MCF 10A (cell line): ENCODE measurements at regions of chr1 and their contacts with region 1.

Region 1: DNA sequence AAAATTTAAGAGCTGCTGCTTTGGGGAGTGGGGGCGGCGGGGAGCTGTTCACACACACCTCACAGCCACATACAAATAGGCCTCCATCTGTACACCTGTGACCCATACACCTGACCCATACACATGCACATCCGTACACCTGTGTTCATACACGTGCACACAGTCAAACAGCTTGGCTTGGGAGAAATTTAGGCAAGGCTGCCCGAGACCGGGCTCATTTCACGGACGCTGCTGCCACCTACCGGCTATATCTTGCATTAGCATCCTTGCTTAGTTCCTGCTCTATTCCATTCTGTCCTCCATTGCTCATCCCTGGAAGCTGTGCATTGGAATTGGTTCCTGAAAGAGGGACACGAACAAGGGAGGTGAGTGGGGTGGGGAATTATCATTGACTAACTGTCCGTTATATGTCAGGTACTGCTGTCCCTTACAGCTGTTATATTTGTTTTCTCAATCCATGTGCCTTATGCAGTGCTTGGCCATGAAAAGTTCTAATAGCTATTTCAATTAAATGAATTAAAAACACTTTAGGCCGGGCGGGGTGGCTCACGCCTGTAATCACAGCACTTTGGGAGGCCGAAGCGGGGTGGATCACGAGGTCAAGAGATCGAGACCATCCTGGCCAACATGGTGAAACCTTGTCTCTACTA is 37.1 kb upstream of the EPB41 start:
- DNase-seq: peak; percentile 85
- H3K4me3 Mint-ChIP-seq: no peak overlapping the region
- H3K27ac Mint-ChIP-seq: no peak overlapping the region
- H3K4me1 Mint-ChIP-seq: peaks cover 4% of the 10 kb centered on the region
- H3K27me3 Mint-ChIP-seq: no peaks in the 10 kb centered on the region
- CTCF ChIP-seq: peak; percentile 91

Region 2: DNA sequence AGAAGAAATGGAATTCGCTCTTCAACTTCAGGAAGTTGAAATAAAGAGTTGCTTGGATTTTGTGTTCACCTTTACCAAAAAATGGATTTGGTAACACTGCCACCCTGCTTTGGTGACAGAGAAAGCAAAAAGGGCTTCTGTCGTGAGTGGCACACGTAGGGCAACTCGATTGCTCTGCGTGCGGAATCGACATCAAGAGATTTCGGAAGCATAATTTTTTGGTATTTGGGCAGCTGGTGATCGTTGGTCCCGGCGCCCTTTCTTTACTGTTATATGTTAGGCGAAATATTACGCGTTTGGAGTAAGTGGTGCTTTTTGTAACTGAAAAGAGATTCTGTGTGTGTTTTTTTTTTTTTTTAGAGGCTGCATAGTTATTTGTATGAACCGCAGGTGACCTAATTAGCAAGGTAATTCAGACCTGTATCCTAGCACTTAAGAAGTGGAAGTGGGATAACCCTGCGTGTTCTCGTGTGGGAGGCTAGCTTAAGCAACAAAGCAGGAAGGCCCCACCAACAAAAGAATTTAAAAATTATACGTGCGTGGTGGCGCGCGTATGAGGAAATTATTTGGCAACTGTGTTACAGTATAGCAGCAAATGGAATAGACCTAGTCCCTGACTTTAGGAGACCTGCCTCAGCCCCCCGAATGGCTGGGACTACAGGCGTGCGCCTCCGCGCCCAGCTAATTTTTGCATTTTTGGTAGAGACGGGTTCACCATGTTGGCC is 228.6 kb before region 1 on chr1 and contains the start of gene RNU11:
- CTCF ChIA-PET with region 1: interaction called, 7 read pairs
- POLR2A ChIA-PET with region 1: interaction called, 9 read pairs
- intact Hi-C with region 1: loop called (anchors 2 kb)
- DNase-seq: peak; percentile 97
- H3K4me3 Mint-ChIP-seq: peak within 1 kb of the TSS; percentile 77
- H3K27ac Mint-ChIP-seq: peak within 1 kb of the TSS; percentile 100
- H3K4me1 Mint-ChIP-seq: peaks cover 25% of the 10 kb centered on the region
- H3K27me3 Mint-ChIP-seq: no peaks in the 10 kb centered on the region
- CTCF ChIP-seq: no peak
- total RNA-seq, gene RNU11: not detected in 2 replicates

Region 3: DNA sequence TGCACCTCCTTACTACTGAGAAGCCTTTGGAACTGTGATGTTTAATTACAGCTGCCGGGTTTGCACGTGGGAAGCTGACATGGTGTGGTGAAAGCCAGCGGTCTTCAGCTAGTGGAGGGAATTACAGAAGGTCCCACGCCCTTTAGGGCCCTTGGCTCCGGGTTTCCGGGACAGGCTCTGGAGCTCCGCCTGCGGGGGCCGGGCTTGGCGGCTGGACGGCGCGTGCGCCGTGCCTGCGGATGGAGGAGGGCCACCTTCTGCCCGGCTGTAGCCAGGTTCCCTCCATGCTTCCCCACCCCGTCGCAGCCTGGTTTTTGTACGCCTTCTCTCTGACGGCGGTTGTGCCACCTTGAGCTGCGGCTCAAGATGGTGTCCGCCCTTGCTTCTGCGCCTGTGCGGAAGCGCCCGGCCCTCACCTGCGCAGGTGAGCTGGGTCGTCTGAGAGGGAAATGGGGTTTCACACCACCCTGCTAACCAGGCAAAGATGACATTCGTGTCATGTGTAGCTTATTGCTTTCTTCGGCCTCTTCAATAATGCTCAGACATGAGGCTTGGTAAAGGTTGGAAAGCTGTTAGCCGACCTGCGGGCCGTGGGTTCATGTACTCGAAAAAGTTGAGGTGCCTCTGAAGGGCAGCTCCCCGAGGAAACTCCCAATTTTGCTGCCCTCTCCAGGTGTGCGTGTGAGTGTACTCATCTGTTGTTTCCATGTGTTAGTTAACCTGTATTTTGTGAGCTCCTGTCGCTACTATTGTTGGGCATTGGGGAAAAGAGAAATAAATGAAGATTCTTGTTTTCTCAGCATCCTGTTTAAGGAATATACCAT is 101.9 kb before region 1 on chr1:
- CTCF ChIA-PET with region 1: interaction called, 24 read pairs
- POLR2A ChIA-PET with region 1: interaction called, 11 read pairs
- intact Hi-C with region 1: no loop called
- DNase-seq: peak; percentile 45
- H3K4me3 Mint-ChIP-seq: peak overlapping the region; percentile 64
- H3K27ac Mint-ChIP-seq: no peak overlapping the region
- H3K4me1 Mint-ChIP-seq: no peaks in the 10 kb centered on the region
- H3K27me3 Mint-ChIP-seq: no peaks in the 10 kb centered on the region
- CTCF ChIP-seq: no peak

Region 4: GRCh38 chr1:28792644-28793121 is 84.6 kb before region 1 on chr1:
- CTCF ChIA-PET with region 1: interaction called, 120 read pairs
- POLR2A ChIA-PET with region 1: no interaction called
- intact Hi-C with region 1: no loop called
- DNase-seq: no peak
- H3K4me3 Mint-ChIP-seq: no peak overlapping the region
- H3K27ac Mint-ChIP-seq: no peak overlapping the region
- H3K4me1 Mint-ChIP-seq: peaks cover 6% of the 10 kb centered on the region
- H3K27me3 Mint-ChIP-seq: peaks cover 11% of the 10 kb centered on the region
- CTCF ChIP-seq: no peak

Region 5: DNA sequence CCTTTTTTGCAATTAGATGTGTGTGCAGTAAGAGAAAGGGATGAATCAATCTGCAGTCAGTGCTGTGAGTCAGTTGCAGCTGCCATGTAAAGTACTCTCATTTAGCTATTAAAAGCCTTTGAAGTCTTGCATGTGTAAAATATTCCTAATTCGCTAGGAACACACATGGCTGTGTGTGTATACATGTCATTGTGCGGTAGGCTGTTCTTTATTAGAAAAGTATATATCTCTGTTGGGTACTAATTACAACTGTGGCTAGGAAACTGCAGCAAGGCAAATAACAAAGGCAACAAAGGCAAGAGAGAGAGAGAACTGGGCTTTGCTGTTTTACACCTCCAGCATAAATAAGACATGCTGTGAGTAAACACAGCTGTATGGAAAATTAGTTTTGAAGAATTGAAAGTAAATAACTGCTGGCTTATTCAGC is 78.8 kb after region 1 on chr1:
- CTCF ChIA-PET with region 1: no interaction called
- POLR2A ChIA-PET with region 1: no interaction called
- intact Hi-C with region 1: no loop called
- DNase-seq: no peak
- H3K4me3 Mint-ChIP-seq: no peak overlapping the region
- H3K27ac Mint-ChIP-seq: no peak overlapping the region
- H3K4me1 Mint-ChIP-seq: peaks cover 11% of the 10 kb centered on the region
- H3K27me3 Mint-ChIP-seq: no peaks in the 10 kb centered on the region
- CTCF ChIP-seq: no peak

Region 6: GRCh38 chr1:29033829-29034466 is 156.7 kb after region 1 on chr1:
- CTCF ChIA-PET with region 1: interaction called, 311 read pairs
- POLR2A ChIA-PET with region 1: interaction called, 24 read pairs
- intact Hi-C with region 1: loop called (anchors 1 kb)
- DNase-seq: peak; percentile 55
- H3K4me3 Mint-ChIP-seq: no peak overlapping the region
- H3K27ac Mint-ChIP-seq: no peak overlapping the region
- H3K4me1 Mint-ChIP-seq: no peaks in the 10 kb centered on the region
- H3K27me3 Mint-ChIP-seq: no peaks in the 10 kb centered on the region
- CTCF ChIP-seq: peak; percentile 55